Panc1 (cell line): ENCODE measurements at regions of chr4 and their contacts with region 1.

Region 1: DNA sequence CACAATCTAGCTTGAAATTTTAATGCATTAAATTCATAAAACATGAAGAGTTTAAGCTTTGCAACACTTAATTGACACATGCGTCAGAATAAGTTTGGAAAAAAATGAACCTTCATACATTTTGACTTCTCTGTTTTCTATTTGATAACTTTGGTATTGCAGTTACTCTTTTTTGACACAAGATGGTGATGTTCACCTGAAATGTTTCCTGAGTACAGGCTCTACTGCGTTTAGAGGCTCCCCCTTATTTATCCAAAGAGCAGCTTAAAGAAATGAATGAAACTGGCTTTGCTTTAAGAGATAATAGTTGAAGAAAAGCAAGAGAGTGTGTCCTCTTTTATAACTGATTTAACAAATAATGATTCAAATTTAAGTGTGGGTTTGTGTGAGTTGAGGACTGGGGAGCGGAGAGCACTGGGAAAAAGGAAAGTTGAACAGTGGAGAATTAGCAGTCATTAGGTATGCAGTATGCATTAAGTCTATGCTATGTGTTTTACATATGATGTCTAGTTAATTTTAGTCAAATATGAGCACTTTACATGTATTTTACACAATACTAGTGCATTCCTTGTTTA is 180.6 kb upstream of the NUDT6 start:
- DNase-seq: no peak
- ATAC-seq: peak; percentile 83
- H3K4me3 ChIP-seq: no peak overlapping the region
- H3K27ac ChIP-seq: peak overlapping the region; percentile 72; the same call in 1 of the 2 replicates
- H3K4me1 ChIP-seq: no peaks in the 10 kb centered on the region; the same call in 1 of the 2 replicates
- H3K27me3 ChIP-seq: no peaks in the 10 kb centered on the region
- CTCF ChIP-seq: peak; percentile 57; the same call in 1 of the 2 replicates

Region 2: GRCh38 chr4:122612540-122612939 is 490.4 kb before region 1 on chr4:
- CTCF ChIA-PET with region 1: no interaction called
- POLR2A ChIA-PET with region 1: no interaction called
- in situ Hi-C with region 1: no loop called
- intact Hi-C with region 1: no loop called
- DNase-seq: no peak
- ATAC-seq: no peak
- H3K4me3 ChIP-seq: no peak overlapping the region
- H3K27ac ChIP-seq: no peak overlapping the region
- H3K4me1 ChIP-seq: no peaks in the 10 kb centered on the region
- H3K27me3 ChIP-seq: no peaks in the 10 kb centered on the region
- CTCF ChIP-seq: no peak

Region 3: DNA sequence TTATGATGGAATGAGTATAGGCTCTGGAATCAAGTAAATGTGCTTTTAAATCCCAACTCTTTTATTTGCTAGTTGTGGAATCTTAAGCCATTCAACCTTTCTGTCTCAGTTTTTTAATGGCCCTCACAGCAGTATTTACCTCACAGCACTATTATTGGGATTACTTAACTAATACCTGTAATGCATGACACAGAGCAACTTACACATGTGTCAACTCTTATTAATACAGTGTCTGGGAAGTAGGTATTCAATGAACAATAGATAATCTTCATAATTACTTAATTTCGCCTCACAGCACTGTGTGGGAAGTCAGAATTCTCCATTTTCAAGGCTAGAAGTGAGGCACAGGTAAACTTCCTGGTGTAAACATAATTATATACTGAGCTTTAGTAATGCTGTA is 30.9 kb before region 1 on chr4:
- CTCF ChIA-PET with region 1: no interaction called
- POLR2A ChIA-PET with region 1: no interaction called
- in situ Hi-C with region 1: no loop called
- intact Hi-C with region 1: no loop called
- DNase-seq: no peak
- ATAC-seq: no peak
- H3K4me3 ChIP-seq: no peak overlapping the region
- H3K27ac ChIP-seq: no peak overlapping the region
- H3K4me1 ChIP-seq: no peaks in the 10 kb centered on the region
- H3K27me3 ChIP-seq: no peaks in the 10 kb centered on the region
- CTCF ChIP-seq: no peak

Region 4: DNA sequence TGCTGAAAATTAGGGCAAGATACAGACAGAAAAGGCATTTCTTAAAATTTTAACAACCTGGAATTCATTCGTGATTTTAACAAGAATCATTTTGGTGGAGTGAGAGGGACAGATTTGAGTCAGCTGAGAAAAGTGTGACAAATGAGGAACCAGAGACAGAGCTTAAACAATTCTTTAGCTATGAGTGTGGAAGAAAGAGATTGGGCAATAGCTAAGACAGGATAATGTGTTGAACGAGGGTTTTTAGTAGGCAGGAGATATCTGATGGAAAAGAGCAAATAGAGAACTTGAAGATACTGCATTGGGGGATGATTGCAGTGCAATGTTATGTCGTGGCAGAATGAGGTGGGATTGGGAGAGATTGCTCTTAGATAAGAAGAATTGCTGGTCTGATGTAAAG is 129.5 kb after region 1 on chr4:
- CTCF ChIA-PET with region 1: no interaction called
- POLR2A ChIA-PET with region 1: no interaction called
- in situ Hi-C with region 1: no loop called
- intact Hi-C with region 1: no loop called
- DNase-seq: no peak
- ATAC-seq: no peak
- H3K4me3 ChIP-seq: no peak overlapping the region
- H3K27ac ChIP-seq: no peak overlapping the region
- H3K4me1 ChIP-seq: no peaks in the 10 kb centered on the region
- H3K27me3 ChIP-seq: no peaks in the 10 kb centered on the region
- CTCF ChIP-seq: no peak

Region 5: DNA sequence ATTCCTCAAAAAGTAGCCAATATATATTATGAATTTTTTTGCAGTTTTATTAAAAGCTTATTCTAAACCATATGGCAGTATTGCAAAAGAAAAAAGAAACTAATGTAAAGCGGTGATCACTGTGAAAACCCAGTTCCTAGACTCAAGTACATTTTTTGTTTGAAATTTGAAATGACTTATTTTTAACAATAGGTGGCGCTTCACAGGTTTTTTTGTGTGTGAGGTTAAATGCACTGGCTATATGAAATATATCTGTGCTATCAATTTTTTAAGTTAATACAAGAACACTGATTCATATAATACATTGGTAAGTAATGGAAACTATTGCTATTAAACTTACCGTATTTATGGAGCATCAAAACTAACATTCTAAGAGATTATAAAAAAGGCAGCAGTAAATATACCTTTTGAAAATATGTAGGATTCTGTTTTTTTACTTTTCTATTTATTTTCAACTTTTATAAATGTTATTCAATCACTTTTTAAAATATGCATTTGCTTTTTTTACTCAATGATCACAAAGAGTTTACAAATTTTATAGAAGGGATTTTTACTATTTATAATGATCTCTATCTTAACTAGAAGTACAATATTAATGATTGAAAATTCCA is 288.0 kb after region 1 on chr4:
- CTCF ChIA-PET with region 1: no interaction called
- POLR2A ChIA-PET with region 1: interaction called, 10 read pairs
- in situ Hi-C with region 1: no loop called
- intact Hi-C with region 1: loop called (anchors 5 kb)
- DNase-seq: no peak
- ATAC-seq: no peak
- H3K4me3 ChIP-seq: no peak overlapping the region
- H3K27ac ChIP-seq: peak overlapping the region; percentile 69; the same call in 1 of the 2 replicates
- H3K4me1 ChIP-seq: peaks cover 13% of the 10 kb centered on the region; the same call in 1 of the 2 replicates
- H3K27me3 ChIP-seq: no peaks in the 10 kb centered on the region
- CTCF ChIP-seq: peak; percentile 47; the same call in 1 of the 2 replicates